Colonic mucosa (tissue), 4 donors: ENCODE measurements at regions of chr15 and their contacts with region 1.

Region 1: GRCh38 chr15:89057504-89058133 is 30.6 kb upstream of the ABHD2 start:
- DNase-seq: peak; percentile 88
- H3K4me3 ChIP-seq: no peak overlapping the region
- H3K27ac ChIP-seq: no peak overlapping the region
- H3K4me1 ChIP-seq: no peaks in the 10 kb centered on the region
- H3K27me3 ChIP-seq: no peaks in the 10 kb centered on the region
- CTCF ChIP-seq: peak; percentile 99

Region 2: DNA sequence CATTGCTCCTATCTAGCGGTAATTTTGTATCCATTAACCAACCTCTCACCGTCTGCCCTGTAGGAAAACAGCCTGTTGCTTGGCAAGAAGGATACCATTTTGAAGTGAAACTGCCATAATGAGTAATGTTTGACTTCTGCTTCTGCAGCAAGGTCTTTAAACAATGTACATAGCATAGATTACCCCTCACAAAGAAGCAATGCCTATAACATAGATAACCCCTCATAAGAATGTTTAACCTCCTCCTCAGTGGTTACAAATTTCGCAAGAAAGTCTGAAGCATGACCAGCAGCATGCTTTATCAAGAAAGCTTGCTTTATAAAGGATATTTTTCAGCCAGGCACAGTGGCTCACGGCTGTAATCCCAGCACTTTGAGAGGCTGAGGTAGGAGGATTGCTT is 83.2 kb before region 1 on chr15:
- intact Hi-C with region 1: no loop called
- DNase-seq: no peak
- H3K4me3 ChIP-seq: no peak overlapping the region
- H3K27ac ChIP-seq: no peak overlapping the region
- H3K4me1 ChIP-seq: no peaks in the 10 kb centered on the region
- H3K27me3 ChIP-seq: no peaks in the 10 kb centered on the region
- CTCF ChIP-seq: no peak

Region 3: DNA sequence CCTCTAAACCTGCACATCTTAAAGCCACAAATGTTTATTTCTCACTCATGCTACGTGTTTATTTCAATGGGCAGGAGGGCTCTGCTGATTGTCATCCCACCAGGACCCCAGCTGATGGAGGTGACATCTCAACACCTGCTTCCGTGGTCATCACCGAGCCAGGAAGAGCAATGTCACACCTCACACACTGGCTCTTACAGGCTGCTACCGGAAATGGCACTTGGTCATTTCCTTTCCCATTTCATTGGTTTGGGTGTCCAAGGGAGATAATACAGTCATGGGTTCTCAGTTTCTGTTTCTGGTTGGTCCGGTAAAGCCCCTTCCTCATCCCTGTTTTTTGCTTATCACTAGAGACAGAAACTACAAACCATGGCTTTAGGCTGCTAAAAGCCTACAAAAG is 72.6 kb after region 1 on chr15:
- intact Hi-C with region 1: loop called (anchors 5 kb)
- DNase-seq: no peak
- H3K4me3 ChIP-seq: no peak overlapping the region
- H3K27ac ChIP-seq: no peak overlapping the region
- H3K4me1 ChIP-seq: no peaks in the 10 kb centered on the region
- H3K27me3 ChIP-seq: no peaks in the 10 kb centered on the region
- CTCF ChIP-seq: no peak

Region 4: DNA sequence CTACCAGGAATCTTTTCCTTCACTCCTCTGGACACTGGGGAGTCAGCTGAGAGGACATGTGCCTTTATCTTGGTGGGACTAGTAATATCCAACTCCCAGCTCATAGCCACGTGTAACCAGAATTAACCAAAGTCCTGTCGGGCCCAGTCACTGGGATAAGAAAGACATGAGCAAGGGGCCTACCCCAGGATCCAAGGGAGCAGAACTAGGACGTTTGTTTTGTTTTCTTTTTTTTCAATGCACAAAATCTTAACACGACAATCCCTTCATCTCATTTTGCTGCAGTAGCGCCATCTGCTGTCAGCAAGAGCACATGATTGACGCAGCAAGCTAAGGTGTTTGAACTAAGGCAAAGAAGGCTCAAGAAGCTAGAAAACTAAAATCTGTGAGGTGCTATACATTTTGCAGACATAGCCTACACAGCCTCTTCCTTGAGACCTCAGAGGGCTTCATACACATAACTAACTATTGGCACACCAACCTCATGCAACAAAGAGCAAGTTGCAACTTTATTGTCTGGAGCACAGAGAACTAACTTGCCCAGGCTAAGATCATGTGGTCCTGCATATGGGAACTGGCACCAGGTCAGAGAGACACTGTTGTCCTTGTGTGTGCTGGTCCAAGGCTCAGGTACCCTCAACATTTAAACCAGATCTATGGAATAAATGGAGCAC is 120.2 kb after region 1 on chr15:
- intact Hi-C with region 1: loop called (anchors 2 kb)
- DNase-seq: peak; percentile 55
- H3K4me3 ChIP-seq: no peak overlapping the region
- H3K27ac ChIP-seq: no peak overlapping the region
- H3K4me1 ChIP-seq: no peaks in the 10 kb centered on the region
- H3K27me3 ChIP-seq: no peaks in the 10 kb centered on the region
- CTCF ChIP-seq: peak; percentile 73

Region 5: DNA sequence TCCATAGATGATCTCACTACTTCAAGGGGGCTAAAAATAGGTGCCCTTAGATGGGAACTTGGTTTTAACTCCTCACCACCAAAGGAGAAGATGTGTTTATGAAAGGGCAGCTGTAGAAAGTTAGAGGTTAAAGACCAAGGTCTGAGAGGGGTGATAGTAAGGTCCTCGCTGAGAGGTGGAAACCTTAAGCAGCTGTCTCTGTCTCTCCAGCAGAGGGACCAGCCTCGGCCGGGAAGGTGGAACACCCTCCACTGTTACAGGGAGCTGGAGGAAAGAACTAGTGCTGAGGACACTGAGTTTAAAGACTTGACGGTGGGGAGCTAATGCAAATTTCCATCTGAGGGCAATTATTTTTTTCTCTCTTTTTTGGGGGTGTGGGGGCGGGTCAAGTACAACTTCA is 172.7 kb after region 1 on chr15:
- intact Hi-C with region 1: no loop called
- DNase-seq: no peak
- H3K4me3 ChIP-seq: no peak overlapping the region
- H3K27ac ChIP-seq: no peak overlapping the region
- H3K4me1 ChIP-seq: no peaks in the 10 kb centered on the region
- H3K27me3 ChIP-seq: no peaks in the 10 kb centered on the region
- CTCF ChIP-seq: no peak